B cell (primary cell): ENCODE measurements at regions of chr10 and their contacts with region 1.

Region 1: GRCh38 chr10:311901-312665 is 176.8 kb downstream of the ZMYND11 start:
- DNase-seq: peak; percentile 73
- ATAC-seq: peak; percentile 79
- H3K4me3 ChIP-seq: peak overlapping the region in 4 of 5 experiments; percentile 40 to 51 (median 46)
- H3K4me3 Mint-ChIP-seq: peak overlapping the region; percentile 84
- H3K27ac ChIP-seq: peak overlapping the region; percentile 79 to 89
- H3K27ac Mint-ChIP-seq: peak overlapping the region; percentile 95
- H3K4me1 ChIP-seq: peaks cover 82 to 94% of the 10 kb centered on the region in 2 donors
- H3K4me1 Mint-ChIP-seq: peaks cover 88% of the 10 kb centered on the region
- H3K27me3 ChIP-seq: no peaks in the 10 kb centered on the region
- H3K27me3 Mint-ChIP-seq: no peaks in the 10 kb centered on the region
- CTCF ChIP-seq: no peak

Region 2: GRCh38 chr10:260819-261429 is 51.2 kb before region 1 on chr10:
- CTCF ChIA-PET with region 1: no interaction called
- POLR2A ChIA-PET with region 1: no interaction called
- intact Hi-C with region 1: loop called (anchors 2 kb)
- DNase-seq: peak; percentile 51
- ATAC-seq: peak; percentile 56
- H3K4me3 ChIP-seq: peak overlapping the region in 4 of 5 experiments; percentile 13 to 44 (median 26)
- H3K4me3 Mint-ChIP-seq: peak overlapping the region; percentile 81
- H3K27ac ChIP-seq: peak overlapping the region; percentile 57 to 73
- H3K27ac Mint-ChIP-seq: peak overlapping the region; percentile 93
- H3K4me1 ChIP-seq: peaks cover 10 to 15% of the 10 kb centered on the region in 2 donors
- H3K4me1 Mint-ChIP-seq: peaks cover 25% of the 10 kb centered on the region
- H3K27me3 ChIP-seq: no peaks in the 10 kb centered on the region
- H3K27me3 Mint-ChIP-seq: no peaks in the 10 kb centered on the region
- CTCF ChIP-seq: no peak

Region 3: DNA sequence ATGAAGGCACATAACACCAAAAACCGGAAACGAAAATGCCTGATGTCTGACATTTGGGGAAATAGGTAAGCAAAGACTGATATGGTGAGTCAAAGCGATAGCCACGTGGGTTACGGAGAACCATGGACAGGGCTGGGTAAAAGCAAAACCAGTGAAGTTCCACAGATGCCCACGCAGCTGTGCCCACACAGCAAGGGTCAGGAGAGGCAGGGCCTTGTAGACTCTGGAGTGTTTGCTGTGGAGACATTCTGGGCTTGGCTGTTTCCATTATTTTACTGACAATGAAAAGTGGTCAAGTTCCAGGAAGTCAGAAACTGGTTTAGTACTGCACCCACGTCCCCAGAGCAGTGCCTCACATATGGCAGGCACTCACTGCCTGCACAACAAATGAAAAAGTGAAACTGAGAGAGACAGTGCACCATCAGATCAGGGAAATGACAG is 28.1 kb before region 1 on chr10:
- CTCF ChIA-PET with region 1: interaction called, 4 read pairs
- POLR2A ChIA-PET with region 1: no interaction called
- intact Hi-C with region 1: loop called (anchors 1 kb)
- DNase-seq: peak; percentile 52
- ATAC-seq: peak; percentile 87
- H3K4me3 ChIP-seq: no peak overlapping the region
- H3K4me3 Mint-ChIP-seq: peak overlapping the region; percentile 64
- H3K27ac ChIP-seq: no peak overlapping the region
- H3K27ac Mint-ChIP-seq: peak overlapping the region; percentile 79
- H3K4me1 ChIP-seq: peaks cover 0 to 13% of the 10 kb centered on the region in 2 donors
- H3K4me1 Mint-ChIP-seq: peaks cover 18% of the 10 kb centered on the region
- H3K27me3 ChIP-seq: no peaks in the 10 kb centered on the region
- H3K27me3 Mint-ChIP-seq: no peaks in the 10 kb centered on the region
- CTCF ChIP-seq: no peak

Region 4: GRCh38 chr10:416091-416515 is 104.0 kb after region 1 on chr10:
- CTCF ChIA-PET with region 1: no interaction called
- POLR2A ChIA-PET with region 1: no interaction called
- intact Hi-C with region 1: no loop called
- DNase-seq: no peak
- ATAC-seq: no peak
- H3K4me3 ChIP-seq: no peak overlapping the region
- H3K4me3 Mint-ChIP-seq: no peak overlapping the region
- H3K27ac ChIP-seq: no peak overlapping the region
- H3K27ac Mint-ChIP-seq: no peak overlapping the region
- H3K4me1 ChIP-seq: no peaks in the 10 kb centered on the region
- H3K4me1 Mint-ChIP-seq: peaks cover 2% of the 10 kb centered on the region
- H3K27me3 ChIP-seq: peaks cover 0 to 4% (median 0%) of the 10 kb centered on the region in 4 experiments
- H3K27me3 Mint-ChIP-seq: no peaks in the 10 kb centered on the region
- CTCF ChIP-seq: no peak

Region 5: DNA sequence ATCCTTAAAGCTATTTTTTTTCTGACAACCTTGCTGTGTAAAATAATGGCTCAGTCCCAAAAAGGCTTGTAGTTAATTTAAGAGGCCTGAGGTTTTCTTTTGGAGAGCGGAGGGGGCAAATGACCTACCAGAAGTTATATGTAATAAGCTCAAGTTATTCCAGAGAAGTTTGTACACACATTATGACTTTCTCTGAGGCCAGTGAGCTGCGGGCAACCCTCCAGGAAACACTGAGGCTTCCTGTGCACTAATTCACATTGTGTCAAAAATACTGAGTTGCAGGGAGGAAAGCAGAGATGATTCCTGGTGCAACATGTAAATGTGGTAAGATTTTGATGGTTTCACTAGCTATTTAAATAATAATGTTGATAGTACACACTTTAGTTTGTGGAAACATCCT is 188.8 kb after region 1 on chr10:
- CTCF ChIA-PET with region 1: no interaction called
- POLR2A ChIA-PET with region 1: no interaction called
- intact Hi-C with region 1: no loop called
- DNase-seq: no peak
- ATAC-seq: no peak
- H3K4me3 ChIP-seq: no peak overlapping the region
- H3K4me3 Mint-ChIP-seq: no peak overlapping the region
- H3K27ac ChIP-seq: no peak overlapping the region
- H3K27ac Mint-ChIP-seq: no peak overlapping the region
- H3K4me1 ChIP-seq: peaks cover 6 to 9% of the 10 kb centered on the region in 2 donors
- H3K4me1 Mint-ChIP-seq: peaks cover 4% of the 10 kb centered on the region
- H3K27me3 ChIP-seq: peaks cover 0 to 14% (median 1%) of the 10 kb centered on the region in 4 experiments
- H3K27me3 Mint-ChIP-seq: peaks cover 32% of the 10 kb centered on the region
- CTCF ChIP-seq: no peak

Region 6: GRCh38 chr10:600876-601659 is 289.0 kb after region 1 on chr10:
- CTCF ChIA-PET with region 1: no interaction called
- POLR2A ChIA-PET with region 1: no interaction called
- intact Hi-C with region 1: no loop called
- DNase-seq: no peak
- ATAC-seq: no peak
- H3K4me3 ChIP-seq: no peak overlapping the region
- H3K4me3 Mint-ChIP-seq: no peak overlapping the region
- H3K27ac ChIP-seq: no peak overlapping the region
- H3K27ac Mint-ChIP-seq: no peak overlapping the region
- H3K4me1 ChIP-seq: no peaks in the 10 kb centered on the region
- H3K4me1 Mint-ChIP-seq: no peaks in the 10 kb centered on the region
- H3K27me3 ChIP-seq: peaks cover 0 to 3% (median 0%) of the 10 kb centered on the region in 4 experiments
- H3K27me3 Mint-ChIP-seq: peaks cover 32% of the 10 kb centered on the region
- CTCF ChIP-seq: no peak